Heart right ventricle (tissue), 16 donors: ENCODE measurements at regions of chr18 and their contacts with region 1.

Region 1: DNA sequence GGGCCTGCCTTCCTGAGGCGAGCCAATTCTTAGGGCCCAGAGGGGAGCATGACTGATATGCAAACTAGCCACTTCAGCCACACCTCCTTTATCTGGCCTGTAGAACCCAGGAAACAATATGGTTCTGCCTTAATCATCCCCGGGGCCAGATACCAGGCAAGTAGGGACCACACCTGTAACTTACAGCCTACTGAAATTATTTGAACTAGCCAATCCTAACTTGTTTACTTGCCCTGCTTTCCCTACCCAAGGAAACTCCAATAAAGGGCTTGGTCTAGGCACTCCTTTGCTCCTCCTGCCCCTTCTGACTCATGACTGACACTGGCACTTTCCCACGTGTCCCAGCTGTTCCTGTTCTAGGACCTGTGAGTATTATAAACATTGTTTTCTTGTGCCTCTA is 57.6 kb downstream of the MYOM1 start:
- DNase-seq: no peak
- ATAC-seq: no peak
- H3K4me3 ChIP-seq: no peak overlapping the region
- H3K27ac ChIP-seq: peak overlapping the region in 1 of 10 donors; percentile 10
- H3K4me1 ChIP-seq: peaks cover 0 to 15% (median 6%) of the 10 kb centered on the region in 9 donors
- H3K27me3 ChIP-seq: no peaks in the 10 kb centered on the region
- CTCF ChIP-seq: no peak

Region 2: GRCh38 chr18:3230401-3231334 is 68.5 kb after region 1 on chr18:
- intact Hi-C with region 1: loop called in 1 of 10 experiments (anchors 10 kb)
- DNase-seq: no peak
- ATAC-seq: no peak
- H3K4me3 ChIP-seq: no peak overlapping the region
- H3K27ac ChIP-seq: no peak overlapping the region
- H3K4me1 ChIP-seq: peaks cover 0 to 4% (median 0%) of the 10 kb centered on the region in 9 donors
- H3K27me3 ChIP-seq: no peaks in the 10 kb centered on the region
- CTCF ChIP-seq: no peak

Region 3: DNA sequence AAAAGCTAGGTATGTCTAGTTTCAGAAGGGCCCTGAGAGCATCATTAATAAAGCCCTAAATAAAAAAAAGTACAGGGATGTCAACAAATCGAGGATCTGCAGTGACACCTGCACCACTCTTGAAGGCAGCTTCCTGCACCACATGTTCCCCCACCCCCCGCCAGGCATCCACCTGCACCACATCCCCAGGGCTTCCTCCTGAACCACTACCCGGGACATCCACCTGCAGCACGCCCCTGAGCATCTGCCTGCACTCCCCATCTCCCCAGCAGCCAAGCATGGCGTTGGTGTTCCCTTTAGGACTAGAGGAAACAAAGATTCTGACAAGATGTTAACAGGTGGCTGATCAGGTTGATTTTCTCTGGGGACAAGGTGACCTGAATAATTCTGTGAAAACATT is 1237.7 kb after region 1 on chr18:
- intact Hi-C with region 1: no loop called
- DNase-seq: no peak
- ATAC-seq: no peak
- H3K4me3 ChIP-seq: no peak overlapping the region
- H3K27ac ChIP-seq: no peak overlapping the region
- H3K4me1 ChIP-seq: no peaks in the 10 kb centered on the region
- H3K27me3 ChIP-seq: no peaks in the 10 kb centered on the region
- CTCF ChIP-seq: no peak